HCT116 (cell line): ENCODE measurements at regions of chr9 and their contacts with region 1.

Region 1: GRCh38 chr9:32647671-32648070 is 12.2 kb upstream of the TAF1L start:
- DNase-seq: no peak
- ATAC-seq: no peak
- H3K4me3 ChIP-seq: no peak overlapping the region
- H3K27ac ChIP-seq: no peak overlapping the region
- H3K4me1 ChIP-seq: no peaks in the 10 kb centered on the region; a peak in 1 of 4 replicates
- H3K27me3 ChIP-seq: no peaks in the 10 kb centered on the region
- CTCF ChIP-seq: no peak
- POLR2A ChIP-seq: no peak
- RAD21 ChIP-seq: no peak

Region 2: GRCh38 chr9:32136700-32137339 is 510.9 kb before region 1 on chr9:
- CTCF ChIA-PET with region 1: no interaction called
- POLR2A ChIA-PET with region 1: no interaction called
- RAD21 ChIA-PET with region 1: no interaction called
- intact Hi-C with region 1: no loop called
- DNase-seq: no peak
- ATAC-seq: peak; percentile 59
- H3K4me3 ChIP-seq: no peak overlapping the region
- H3K27ac ChIP-seq: no peak overlapping the region
- H3K4me1 ChIP-seq: no peaks in the 10 kb centered on the region
- H3K27me3 ChIP-seq: no peaks in the 10 kb centered on the region
- CTCF ChIP-seq: 0 out of 6 replicates have a peak, but pooled peaks of 2 of the 3 experiments have one; percentile 13 to 22
- POLR2A ChIP-seq: no peak
- RAD21 ChIP-seq: no peak

Region 3: GRCh38 chr9:32589083-32589723 is 58.5 kb before region 1 on chr9:
- CTCF ChIA-PET with region 1: no interaction called
- POLR2A ChIA-PET with region 1: no interaction called
- RAD21 ChIA-PET with region 1: no interaction called
- intact Hi-C with region 1: no loop called
- DNase-seq: peak; percentile 38
- ATAC-seq: peak; percentile 84
- H3K4me3 ChIP-seq: no peak overlapping the region
- H3K27ac ChIP-seq: no peak overlapping the region
- H3K4me1 ChIP-seq: no peaks in the 10 kb centered on the region
- H3K27me3 ChIP-seq: no peaks in the 10 kb centered on the region
- CTCF ChIP-seq: peak; percentile 59 to 73 (median 66); a peak in 5 of 6 replicates
- POLR2A ChIP-seq: no peak
- RAD21 ChIP-seq: peak; percentile 83

Region 4: DNA sequence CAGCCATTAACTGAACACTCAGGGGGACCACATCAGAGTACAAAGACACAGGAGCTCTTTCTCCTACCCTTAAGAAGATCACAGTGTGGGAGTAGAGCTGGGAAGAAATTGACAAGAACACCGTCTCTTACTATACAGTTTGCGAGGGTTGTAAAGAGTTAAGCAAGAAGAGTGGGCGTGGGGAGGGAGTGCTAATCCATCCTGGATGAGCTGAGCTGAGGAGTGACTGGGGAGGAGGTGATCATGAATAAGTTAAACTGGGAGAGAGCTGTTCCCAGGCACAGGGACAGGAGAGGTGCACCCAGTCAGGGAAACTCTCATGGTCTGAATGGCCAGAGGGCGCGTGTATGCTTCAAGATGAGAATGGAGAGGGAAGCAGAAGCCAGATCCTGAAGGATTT is 29.4 kb before region 1 on chr9:
- CTCF ChIA-PET with region 1: no interaction called
- POLR2A ChIA-PET with region 1: no interaction called
- RAD21 ChIA-PET with region 1: no interaction called
- intact Hi-C with region 1: loop called (anchors 5 kb)
- DNase-seq: no peak
- ATAC-seq: no peak
- H3K4me3 ChIP-seq: no peak overlapping the region
- H3K27ac ChIP-seq: no peak overlapping the region
- H3K4me1 ChIP-seq: no peaks in the 10 kb centered on the region
- H3K27me3 ChIP-seq: peaks cover 8% of the 10 kb centered on the region
- CTCF ChIP-seq: no peak
- POLR2A ChIP-seq: no peak
- RAD21 ChIP-seq: no peak

Region 5: GRCh38 chr9:32672461-32672860 is 24.8 kb after region 1 on chr9:
- CTCF ChIA-PET with region 1: no interaction called
- POLR2A ChIA-PET with region 1: no interaction called
- RAD21 ChIA-PET with region 1: no interaction called
- intact Hi-C with region 1: no loop called
- DNase-seq: no peak
- ATAC-seq: no peak
- H3K4me3 ChIP-seq: no peak overlapping the region
- H3K27ac ChIP-seq: no peak overlapping the region
- H3K4me1 ChIP-seq: no peaks in the 10 kb centered on the region
- H3K27me3 ChIP-seq: 0 out of 2 replicates have a peak, but pooled peaks cover 5% of the 10 kb centered on the region
- CTCF ChIP-seq: no peak
- POLR2A ChIP-seq: no peak
- RAD21 ChIP-seq: no peak